CD4-positive, alpha-beta memory T cell (primary cell): ENCODE measurements at regions of chr5 and their contacts with region 1.

Region 1: DNA sequence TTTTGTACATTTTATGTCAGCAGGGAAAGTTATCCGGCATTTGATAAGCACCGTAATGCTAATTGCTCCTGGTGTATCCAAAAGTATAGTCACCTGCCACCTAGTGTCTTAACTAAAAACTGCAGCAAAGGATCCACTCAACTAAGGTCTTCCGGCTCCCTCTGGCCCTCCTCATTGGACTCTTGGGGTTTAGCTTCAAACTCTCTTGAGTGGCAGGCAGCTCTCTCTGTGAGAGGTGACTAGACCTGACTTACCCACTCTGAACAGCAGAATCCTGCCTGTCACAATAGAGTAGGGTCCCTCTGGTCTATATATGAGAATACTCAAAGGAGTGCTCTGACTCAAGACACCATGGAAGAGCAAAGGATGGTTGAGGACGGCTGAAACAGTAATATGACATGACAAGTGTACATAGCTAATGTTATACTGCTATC is 60.3 kb upstream of the CAST start:
- DNase-seq: peak; percentile 62 to 72 (median 64)
- H3K4me3 ChIP-seq: no peak overlapping the region
- H3K4me3 Mint-ChIP-seq: no peak overlapping the region
- H3K27ac ChIP-seq: no peak overlapping the region
- H3K27ac Mint-ChIP-seq: peak overlapping the region in 1 of 7 donors; percentile 53
- H3K4me1 ChIP-seq: no peaks in the 10 kb centered on the region
- H3K4me1 Mint-ChIP-seq: peaks cover 0 to 4% (median 0%) of the 10 kb centered on the region in 4 donors
- H3K27me3 ChIP-seq: no peaks in the 10 kb centered on the region
- H3K27me3 Mint-ChIP-seq: peaks cover 3 to 8% of the 10 kb centered on the region in 2 donors

Region 2: DNA sequence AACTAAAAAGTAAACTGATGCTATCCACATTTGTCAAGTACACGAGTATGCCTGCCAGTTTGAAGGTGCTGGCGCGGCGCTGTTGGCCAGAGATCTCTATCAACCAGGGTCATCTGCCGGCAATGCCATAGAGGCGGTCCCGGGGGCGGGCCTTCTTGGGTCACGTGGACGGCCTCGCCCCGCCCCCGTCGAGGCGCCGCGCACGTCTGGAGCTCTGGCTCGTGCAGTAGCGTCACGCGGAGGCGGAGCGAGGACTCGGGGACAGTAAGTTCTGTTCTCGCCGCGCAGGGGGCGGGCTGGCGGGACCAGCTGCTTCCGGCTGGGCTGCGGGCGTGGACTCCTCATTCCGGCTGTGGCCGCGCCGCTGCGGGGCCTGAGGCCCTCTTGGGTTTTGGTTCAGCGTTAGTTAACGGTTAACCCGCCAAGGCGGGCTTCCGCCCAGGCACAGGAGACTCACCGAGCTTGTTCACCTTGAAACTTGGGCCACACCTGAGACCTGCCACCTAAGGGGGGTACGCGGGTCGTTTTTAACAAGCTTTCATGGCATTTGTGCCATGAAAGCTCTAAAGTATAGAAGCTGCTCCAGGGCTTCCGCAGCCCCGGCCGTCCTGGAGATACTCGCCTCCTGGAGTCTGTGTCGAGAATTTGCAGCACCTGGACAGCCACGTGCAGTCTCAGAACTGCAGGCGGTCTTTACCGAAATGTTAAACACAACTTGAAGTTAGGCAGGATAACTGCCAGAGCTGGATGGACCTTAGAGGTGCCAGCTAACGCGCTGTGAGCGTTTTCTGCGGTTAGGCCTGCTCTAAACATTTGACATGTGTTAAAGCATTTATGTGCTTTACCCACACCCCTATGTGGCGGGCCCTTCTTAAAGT is 955.0 kb before region 1 on chr5 and contains the start of gene RFESD:
- CTCF ChIA-PET with region 1: interaction called, 3 read pairs
- POLR2A ChIA-PET with region 1: no interaction called
- intact Hi-C with region 1: loop called (anchors 1 kb)
- DNase-seq: peak; percentile 91 to 95 (median 92)
- H3K4me3 ChIP-seq: peak within 1 kb of the TSS; percentile 71 to 94
- H3K4me3 Mint-ChIP-seq: peak within 1 kb of the TSS; percentile 87 to 93 (median 89)
- H3K27ac ChIP-seq: peak within 1 kb of the TSS; percentile 84
- H3K27ac Mint-ChIP-seq: peak within 1 kb of the TSS; percentile 57 to 94 (median 93)
- H3K4me1 ChIP-seq: peaks cover 31% of the 10 kb centered on the region
- H3K4me1 Mint-ChIP-seq: peaks cover 20 to 42% (median 26%) of the 10 kb centered on the region in 4 donors
- H3K27me3 ChIP-seq: no peaks in the 10 kb centered on the region
- H3K27me3 Mint-ChIP-seq: no peaks in the 10 kb centered on the region
- total RNA-seq, gene RFESD: 9.1 to 9.3 TPM

Region 3: DNA sequence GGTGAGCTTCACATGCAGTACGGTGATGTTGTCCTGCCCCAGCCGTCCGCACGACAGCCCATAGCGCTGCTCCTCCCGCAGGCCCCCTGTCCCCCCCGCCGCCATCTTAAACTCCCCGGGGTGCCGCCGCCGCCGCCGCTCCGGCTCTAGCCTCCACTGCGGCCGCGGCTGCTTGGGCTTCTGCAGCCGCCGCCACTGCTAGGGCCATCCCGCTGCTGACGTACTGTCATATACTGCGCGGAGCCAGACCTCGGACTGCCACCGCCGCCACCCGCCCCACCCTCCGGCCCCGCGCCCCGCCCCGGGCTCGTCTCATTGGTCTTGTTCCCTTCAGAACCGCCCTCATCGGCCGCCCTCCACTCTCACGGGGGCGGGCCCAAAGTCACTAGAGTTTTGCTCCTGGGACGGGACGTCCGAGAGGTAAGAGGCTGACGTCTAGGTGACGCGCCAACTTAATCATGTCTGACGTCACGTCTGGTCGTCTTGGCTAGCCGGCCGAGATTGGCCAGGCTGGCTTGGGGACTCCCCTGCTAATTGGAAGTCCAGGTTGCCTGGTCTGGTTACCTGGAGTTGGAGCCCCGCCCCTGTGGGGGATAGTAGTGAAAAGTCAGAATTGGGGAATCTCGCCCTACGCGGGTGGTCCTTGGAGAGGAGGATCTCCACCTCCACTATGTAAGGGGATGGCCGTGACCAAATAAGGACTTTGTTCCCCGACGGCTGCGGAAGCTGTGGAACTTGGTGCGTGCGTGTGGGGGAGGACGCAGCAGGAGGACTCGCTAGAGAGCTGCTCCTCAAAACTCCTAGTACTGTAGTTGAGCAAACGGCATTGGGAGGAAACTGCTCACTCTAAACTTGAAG is 640.0 kb before region 1 on chr5 and contains the start of gene ELL2:
- CTCF ChIA-PET with region 1: no interaction called
- POLR2A ChIA-PET with region 1: no interaction called
- intact Hi-C with region 1: loop called (anchors 10 kb)
- DNase-seq: peak; percentile 92 to 99 (median 94)
- H3K4me3 ChIP-seq: peak within 1 kb of the TSS; percentile 70 to 81
- H3K4me3 Mint-ChIP-seq: peak within 1 kb of the TSS; percentile 94 to 98 (median 96)
- H3K27ac ChIP-seq: peak within 1 kb of the TSS; percentile 83
- H3K27ac Mint-ChIP-seq: peak within 1 kb of the TSS; percentile 98 to 99 (median 99)
- H3K4me1 ChIP-seq: peaks cover 29% of the 10 kb centered on the region
- H3K4me1 Mint-ChIP-seq: peaks cover 24 to 47% (median 38%) of the 10 kb centered on the region in 4 donors
- H3K27me3 ChIP-seq: no peaks in the 10 kb centered on the region
- H3K27me3 Mint-ChIP-seq: peaks cover 0 to 3% of the 10 kb centered on the region in 2 donors
- total RNA-seq, gene ELL2: 14.0 to 15.6 TPM

Region 4: GRCh38 chr5:96344678-96345577 is 256.9 kb before region 1 on chr5:
- CTCF ChIA-PET with region 1: interaction called, 490 read pairs
- POLR2A ChIA-PET with region 1: no interaction called
- intact Hi-C with region 1: loop called (anchors 1 kb)
- DNase-seq: peak in 4 of 5 donors; percentile 64 to 76 (median 68)
- H3K4me3 ChIP-seq: no peak overlapping the region
- H3K4me3 Mint-ChIP-seq: peak overlapping the region; percentile 10 to 60 (median 43)
- H3K27ac ChIP-seq: no peak overlapping the region
- H3K27ac Mint-ChIP-seq: peak overlapping the region in 6 of 7 donors; percentile 4 to 66 (median 19)
- H3K4me1 ChIP-seq: peaks cover 17% of the 10 kb centered on the region
- H3K4me1 Mint-ChIP-seq: peaks cover 12 to 18% (median 14%) of the 10 kb centered on the region in 4 donors
- H3K27me3 ChIP-seq: peaks cover 7% of the 10 kb centered on the region
- H3K27me3 Mint-ChIP-seq: peaks cover 7 to 9% of the 10 kb centered on the region in 2 donors

Region 5: GRCh38 chr5:96384353-96384752 is 217.5 kb before region 1 on chr5:
- CTCF ChIA-PET with region 1: interaction called, 11 read pairs
- POLR2A ChIA-PET with region 1: no interaction called
- intact Hi-C with region 1: no loop called
- DNase-seq: no peak
- H3K4me3 ChIP-seq: no peak overlapping the region
- H3K4me3 Mint-ChIP-seq: no peak overlapping the region
- H3K27ac ChIP-seq: no peak overlapping the region
- H3K27ac Mint-ChIP-seq: no peak overlapping the region
- H3K4me1 ChIP-seq: no peaks in the 10 kb centered on the region
- H3K4me1 Mint-ChIP-seq: peaks cover 0 to 5% (median 2%) of the 10 kb centered on the region in 4 donors
- H3K27me3 ChIP-seq: no peaks in the 10 kb centered on the region
- H3K27me3 Mint-ChIP-seq: peaks cover 16 to 19% of the 10 kb centered on the region in 2 donors

Region 6: GRCh38 chr5:96582343-96582742 is 19.5 kb before region 1 on chr5:
- CTCF ChIA-PET with region 1: interaction called, 12 read pairs
- POLR2A ChIA-PET with region 1: no interaction called
- intact Hi-C with region 1: no loop called
- DNase-seq: no peak
- H3K4me3 ChIP-seq: no peak overlapping the region
- H3K4me3 Mint-ChIP-seq: no peak overlapping the region
- H3K27ac ChIP-seq: no peak overlapping the region
- H3K27ac Mint-ChIP-seq: no peak overlapping the region
- H3K4me1 ChIP-seq: peaks cover 6% of the 10 kb centered on the region
- H3K4me1 Mint-ChIP-seq: peaks cover 6 to 13% (median 10%) of the 10 kb centered on the region in 4 donors
- H3K27me3 ChIP-seq: no peaks in the 10 kb centered on the region
- H3K27me3 Mint-ChIP-seq: peaks cover 7 to 10% of the 10 kb centered on the region in 2 donors

Region 7: GRCh38 chr5:98570661-98571191 is 1968.9 kb after region 1 on chr5:
- CTCF ChIA-PET with region 1: no interaction called
- POLR2A ChIA-PET with region 1: no interaction called
- intact Hi-C with region 1: no loop called
- DNase-seq: no peak
- H3K4me3 ChIP-seq: no peak overlapping the region
- H3K4me3 Mint-ChIP-seq: no peak overlapping the region
- H3K27ac ChIP-seq: no peak overlapping the region
- H3K27ac Mint-ChIP-seq: no peak overlapping the region
- H3K4me1 ChIP-seq: no peaks in the 10 kb centered on the region
- H3K4me1 Mint-ChIP-seq: peaks cover 0 to 3% (median 0%) of the 10 kb centered on the region in 4 donors
- H3K27me3 ChIP-seq: no peaks in the 10 kb centered on the region
- H3K27me3 Mint-ChIP-seq: peaks cover 2% of the 10 kb centered on the region in 2 donors